ENCODE measurements at regions of chr7 and their contacts with region 1.

Region 1: GRCh38 chr7:39589323-39590111 is 23.3 kb downstream of the YAE1 start:
- DNase-seq: peak in 33 of 35 experiments; percentile 7 to 78 (median 45)
- ATAC-seq: peak; percentile 85 to 96 (median 91)
- H3K4me3 ChIP-seq: no peak overlapping the region
- H3K4me3 Mint-ChIP-seq: peak overlapping the region; percentile 1 to 54 (median 14)
- H3K27ac ChIP-seq: no peak overlapping the region
- H3K27ac Mint-ChIP-seq: peak overlapping the region; percentile 67 to 80
- H3K4me1 ChIP-seq: peaks cover 7 to 8% of the 10 kb centered on the region in 2 experiments
- H3K4me1 Mint-ChIP-seq: peaks cover 16 to 58% (median 52%) of the 10 kb centered on the region in 3 donors
- H3K27me3 ChIP-seq: no peaks in the 10 kb centered on the region
- H3K27me3 Mint-ChIP-seq: no peaks in the 10 kb centered on the region

Region 2: DNA sequence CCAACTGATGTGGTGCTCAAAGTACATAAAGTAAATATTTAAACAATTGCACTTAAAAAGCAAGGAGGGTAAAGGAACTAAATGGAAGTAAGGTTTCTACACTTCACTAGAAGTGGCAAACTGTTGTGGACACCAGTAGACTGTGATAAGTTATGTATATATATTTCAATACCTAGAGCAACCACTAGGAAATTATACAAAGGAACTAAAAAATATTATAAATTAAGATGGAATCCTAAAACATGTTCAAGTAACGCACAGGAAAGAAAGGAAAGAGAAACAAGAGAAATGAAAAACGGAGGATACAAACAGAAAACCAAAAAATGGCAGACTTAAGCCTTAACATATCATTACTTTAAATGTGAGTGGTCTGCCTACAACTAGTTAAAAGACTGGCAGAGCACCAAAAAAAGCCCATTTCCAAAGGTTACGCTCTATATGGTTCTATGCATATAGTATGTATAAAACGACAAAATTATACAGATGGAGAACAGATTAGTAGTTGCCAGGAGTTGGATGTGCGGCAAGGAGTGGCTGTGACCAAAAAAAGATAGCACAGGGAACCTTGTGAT is 699.6 kb before region 1 on chr7:
- CTCF ChIA-PET with region 1: interaction called in 1 of 2 experiments, 11 read pairs
- POLR2A ChIA-PET with region 1: no interaction called
- DNase-seq: no peak
- ATAC-seq: no peak
- H3K4me3 ChIP-seq: no peak overlapping the region
- H3K4me3 Mint-ChIP-seq: no peak overlapping the region
- H3K27ac ChIP-seq: no peak overlapping the region
- H3K27ac Mint-ChIP-seq: no peak overlapping the region
- H3K4me1 ChIP-seq: no peaks in the 10 kb centered on the region
- H3K4me1 Mint-ChIP-seq: peaks cover 26 to 42% (median 28%) of the 10 kb centered on the region in 3 donors
- H3K27me3 ChIP-seq: no peaks in the 10 kb centered on the region
- H3K27me3 Mint-ChIP-seq: no peaks in the 10 kb centered on the region

Region 3: DNA sequence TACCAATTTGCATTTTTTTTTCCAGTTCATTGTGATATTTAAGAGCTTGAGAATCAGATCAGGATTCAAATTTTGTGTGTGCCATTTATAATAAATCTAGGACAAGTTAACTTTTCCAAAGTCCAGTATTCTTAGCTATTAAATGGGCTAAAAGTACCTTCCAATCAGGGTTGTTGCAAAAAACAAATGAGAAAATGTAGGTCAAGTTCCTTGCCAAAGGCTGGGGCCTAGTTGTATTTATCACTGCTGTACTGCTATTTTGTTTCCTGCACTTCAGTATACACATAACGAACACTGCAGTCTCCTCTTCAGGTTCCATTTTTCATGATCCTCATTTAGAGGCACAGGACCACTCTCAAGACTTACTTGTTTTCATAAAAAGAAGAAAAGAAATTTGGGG is 673.1 kb before region 1 on chr7:
- CTCF ChIA-PET with region 1: no interaction called
- POLR2A ChIA-PET with region 1: no interaction called
- DNase-seq: no peak
- ATAC-seq: no peak
- H3K4me3 ChIP-seq: no peak overlapping the region
- H3K4me3 Mint-ChIP-seq: no peak overlapping the region
- H3K27ac ChIP-seq: no peak overlapping the region
- H3K27ac Mint-ChIP-seq: no peak overlapping the region
- H3K4me1 ChIP-seq: no peaks in the 10 kb centered on the region
- H3K4me1 Mint-ChIP-seq: no peaks in the 10 kb centered on the region
- H3K27me3 ChIP-seq: no peaks in the 10 kb centered on the region
- H3K27me3 Mint-ChIP-seq: peaks cover 0 to 7% of the 10 kb centered on the region in 2 donors

Region 4: DNA sequence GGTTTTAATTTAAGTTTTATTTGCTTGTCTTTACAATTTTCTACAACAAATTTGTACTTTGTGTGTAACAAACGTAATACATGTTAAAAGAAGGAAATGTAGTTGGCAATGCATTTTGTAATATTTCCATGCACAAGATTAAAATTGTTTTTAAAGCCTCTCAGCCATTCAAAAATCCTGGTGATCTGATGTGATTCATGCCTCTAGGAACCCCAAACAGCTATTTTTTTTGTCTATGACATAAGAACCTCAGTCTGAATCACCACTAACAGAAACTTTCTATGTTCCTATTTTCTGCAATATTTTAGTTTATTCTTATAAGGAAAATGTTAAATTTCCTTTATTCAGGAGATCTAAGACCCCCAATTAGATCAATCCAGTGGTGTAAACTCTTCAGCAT is 206.4 kb before region 1 on chr7:
- CTCF ChIA-PET with region 1: no interaction called
- POLR2A ChIA-PET with region 1: no interaction called
- DNase-seq: no peak
- ATAC-seq: no peak
- H3K4me3 ChIP-seq: no peak overlapping the region
- H3K4me3 Mint-ChIP-seq: no peak overlapping the region
- H3K27ac ChIP-seq: no peak overlapping the region
- H3K27ac Mint-ChIP-seq: no peak overlapping the region
- H3K4me1 ChIP-seq: no peaks in the 10 kb centered on the region
- H3K4me1 Mint-ChIP-seq: no peaks in the 10 kb centered on the region
- H3K27me3 ChIP-seq: peaks cover 0 to 3% of the 10 kb centered on the region in 2 experiments
- H3K27me3 Mint-ChIP-seq: peaks cover 12 to 40% of the 10 kb centered on the region in 2 donors

Region 5: DNA sequence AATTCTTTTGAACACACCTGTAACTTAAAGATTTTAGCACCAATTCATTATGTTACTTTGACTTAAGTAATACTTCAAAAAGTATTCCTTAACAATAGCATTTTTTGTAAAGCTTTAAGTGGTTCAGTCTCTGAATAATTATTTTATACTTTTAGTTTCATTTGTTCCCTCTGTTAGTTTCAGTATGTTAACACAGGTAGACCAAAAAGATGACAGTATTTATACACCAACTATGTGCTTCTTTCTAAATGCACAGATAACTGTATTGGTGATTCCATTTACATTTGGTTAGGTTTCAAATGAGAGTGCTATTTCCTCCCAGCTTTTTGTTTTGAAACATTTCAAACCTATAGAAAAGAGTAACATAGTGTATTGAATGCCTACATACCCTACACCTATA is 47.9 kb after region 1 on chr7:
- CTCF ChIA-PET with region 1: no interaction called
- POLR2A ChIA-PET with region 1: no interaction called
- DNase-seq: no peak
- ATAC-seq: no peak
- H3K4me3 ChIP-seq: no peak overlapping the region
- H3K4me3 Mint-ChIP-seq: no peak overlapping the region
- H3K27ac ChIP-seq: no peak overlapping the region
- H3K27ac Mint-ChIP-seq: no peak overlapping the region
- H3K4me1 ChIP-seq: peaks cover 31 to 34% of the 10 kb centered on the region in 2 experiments
- H3K4me1 Mint-ChIP-seq: peaks cover 82 to 97% (median 92%) of the 10 kb centered on the region in 3 donors
- H3K27me3 ChIP-seq: no peaks in the 10 kb centered on the region
- H3K27me3 Mint-ChIP-seq: no peaks in the 10 kb centered on the region

Region 6: GRCh38 chr7:39720574-39720973 is 131.1 kb after region 1 on chr7:
- CTCF ChIA-PET with region 1: no interaction called
- POLR2A ChIA-PET with region 1: no interaction called
- DNase-seq: no peak
- ATAC-seq: no peak
- H3K4me3 ChIP-seq: no peak overlapping the region
- H3K4me3 Mint-ChIP-seq: no peak overlapping the region
- H3K27ac ChIP-seq: no peak overlapping the region
- H3K27ac Mint-ChIP-seq: no peak overlapping the region
- H3K4me1 ChIP-seq: no peaks in the 10 kb centered on the region
- H3K4me1 Mint-ChIP-seq: no peaks in the 10 kb centered on the region
- H3K27me3 ChIP-seq: peaks cover 0 to 4% of the 10 kb centered on the region in 2 experiments
- H3K27me3 Mint-ChIP-seq: peaks cover 0 to 5% of the 10 kb centered on the region in 2 donors

Region 7: GRCh38 chr7:39958038-39958437 is 368.5 kb after region 1 on chr7:
- CTCF ChIA-PET with region 1: interaction called in 1 of 2 experiments, 10 read pairs
- POLR2A ChIA-PET with region 1: interaction called in 1 of 2 experiments, 11 read pairs
- DNase-seq: no peak
- ATAC-seq: no peak
- H3K4me3 ChIP-seq: no peak overlapping the region
- H3K4me3 Mint-ChIP-seq: peak overlapping the region in 2 of 3 donors; percentile 36 to 98
- H3K27ac ChIP-seq: no peak overlapping the region
- H3K27ac Mint-ChIP-seq: no peak overlapping the region
- H3K4me1 ChIP-seq: peaks cover 22 to 38% of the 10 kb centered on the region in 2 experiments
- H3K4me1 Mint-ChIP-seq: peaks cover 78 to 85% (median 78%) of the 10 kb centered on the region in 3 donors
- H3K27me3 ChIP-seq: no peaks in the 10 kb centered on the region
- H3K27me3 Mint-ChIP-seq: no peaks in the 10 kb centered on the region